WTC11 (cell line): ENCODE measurements at regions of chr17 and their contacts with region 1.

Region 1: GRCh38 chr17:7021993-7022778 is 664 bp upstream of the BCL6B start:
- DNase-seq: peak; percentile 90
- ATAC-seq: peak; percentile 63
- H3K4me3 Mint-ChIP-seq: peak overlapping the region; percentile 91
- H3K27ac Mint-ChIP-seq: peak overlapping the region; percentile 93
- H3K4me1 Mint-ChIP-seq: peaks cover 51% of the 10 kb centered on the region
- H3K27me3 Mint-ChIP-seq: peaks cover 44% of the 10 kb centered on the region
- CTCF ChIP-seq: peak; percentile 88

Region 2: DNA sequence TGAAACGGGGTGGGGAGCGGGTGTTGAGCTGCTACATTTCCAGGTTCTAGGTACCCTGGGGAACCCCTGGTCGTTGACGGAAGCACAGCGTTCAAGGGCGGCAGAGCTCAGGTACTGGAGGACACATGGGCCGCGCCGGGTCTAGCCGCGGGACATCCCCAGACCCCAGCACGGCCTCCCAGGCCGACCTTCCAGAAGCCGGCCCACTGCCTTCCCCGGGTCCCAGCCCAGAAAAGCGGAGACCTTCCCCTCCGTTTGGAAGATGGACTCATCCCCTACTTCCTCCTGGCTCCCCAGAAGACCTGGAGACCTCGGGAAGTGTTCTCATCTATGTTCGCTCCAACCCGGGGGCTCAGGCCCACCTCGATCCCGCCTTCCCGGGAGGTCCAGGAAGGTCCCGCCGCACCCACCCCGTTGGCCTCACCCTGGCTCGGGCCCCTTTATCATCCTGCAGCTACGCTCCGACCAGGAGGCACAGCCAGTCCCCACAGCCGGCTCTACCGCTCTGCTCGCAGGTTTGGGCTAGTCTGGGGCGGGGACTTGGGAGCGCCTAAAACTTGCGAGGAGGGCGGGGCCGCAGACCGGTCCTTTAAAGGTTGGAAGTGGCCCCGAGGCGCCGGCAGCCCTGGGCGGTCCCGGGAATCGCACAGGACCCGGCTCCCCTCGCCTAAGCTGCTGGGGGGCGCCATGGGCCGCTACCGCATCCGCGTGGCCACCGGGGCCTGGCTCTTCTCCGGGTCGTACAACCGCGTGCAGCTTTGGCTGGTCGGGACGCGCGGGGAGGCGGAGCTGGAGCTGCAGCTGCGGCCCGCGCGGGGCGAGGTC is 26.5 kb before region 1 on chr17 and contains the start of gene ALOX12:
- CTCF ChIA-PET with region 1: interaction called, 23 read pairs
- POLR2A ChIA-PET with region 1: no interaction called
- DNase-seq: peak; percentile 77
- ATAC-seq: peak; percentile 78
- H3K4me3 Mint-ChIP-seq: peak within 1 kb of the TSS; percentile 77
- H3K27ac Mint-ChIP-seq: no peak within 1 kb of the TSS
- H3K4me1 Mint-ChIP-seq: peaks cover 8% of the 10 kb centered on the region
- H3K27me3 Mint-ChIP-seq: peaks cover 55% of the 10 kb centered on the region
- CTCF ChIP-seq: no peak
- total RNA-seq, gene ALOX12: 1.6 to 1.9 TPM (median 1.9 TPM) in 3 replicates

Region 3: DNA sequence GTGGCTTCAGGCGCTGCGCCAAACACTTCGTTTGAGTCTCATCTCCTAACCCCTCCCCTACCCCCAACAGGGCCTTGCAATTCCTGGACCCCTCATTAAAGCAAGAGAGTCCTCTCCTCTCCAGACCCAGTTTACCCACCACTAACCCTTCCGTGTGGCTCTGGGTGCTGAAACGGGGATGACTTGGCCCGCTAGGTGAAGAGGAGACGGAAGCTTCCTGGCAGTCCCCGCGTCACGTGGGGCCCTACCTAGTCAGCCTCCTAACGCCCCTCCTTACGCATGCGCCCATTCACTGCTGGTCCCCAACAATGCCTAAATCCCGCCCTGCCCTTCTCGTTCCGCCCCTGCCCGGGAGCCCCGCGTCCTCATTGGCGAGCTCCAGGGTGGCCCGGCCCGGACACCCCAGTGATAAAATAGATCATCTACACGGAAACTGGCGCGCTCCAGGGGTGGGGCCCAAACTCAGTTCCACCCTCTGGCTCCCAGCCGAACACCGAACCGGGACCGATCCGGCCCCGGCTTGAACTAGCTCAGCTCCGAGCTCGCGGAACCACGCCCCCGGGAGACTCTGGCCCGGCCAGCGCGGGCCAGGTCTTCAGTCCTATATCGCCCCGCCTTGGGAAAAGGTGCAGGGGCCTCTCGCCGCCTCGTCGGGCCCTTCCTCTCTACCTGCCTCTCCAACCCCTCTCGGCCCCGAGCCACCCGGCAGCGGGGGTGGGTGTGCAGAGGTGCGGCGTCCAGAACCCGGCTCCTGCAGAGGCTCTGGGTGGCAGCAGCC is 13.6 kb after region 1 on chr17 and contains the start of gene SLC16A13:
- CTCF ChIA-PET with region 1: interaction called, 34 read pairs
- POLR2A ChIA-PET with region 1: interaction called, 10 read pairs
- DNase-seq: peak; percentile 94
- ATAC-seq: peak; percentile 92
- H3K4me3 Mint-ChIP-seq: peak within 1 kb of the TSS; percentile 94
- H3K27ac Mint-ChIP-seq: peak within 1 kb of the TSS; percentile 87; the same call in 1 of the 2 replicates
- H3K4me1 Mint-ChIP-seq: peaks cover 20% of the 10 kb centered on the region
- H3K27me3 Mint-ChIP-seq: peaks cover 20% of the 10 kb centered on the region
- CTCF ChIP-seq: no peak
- total RNA-seq, gene SLC16A13: 5.2 to 7.1 TPM (median 6.9 TPM) in 3 replicates

Region 4: DNA sequence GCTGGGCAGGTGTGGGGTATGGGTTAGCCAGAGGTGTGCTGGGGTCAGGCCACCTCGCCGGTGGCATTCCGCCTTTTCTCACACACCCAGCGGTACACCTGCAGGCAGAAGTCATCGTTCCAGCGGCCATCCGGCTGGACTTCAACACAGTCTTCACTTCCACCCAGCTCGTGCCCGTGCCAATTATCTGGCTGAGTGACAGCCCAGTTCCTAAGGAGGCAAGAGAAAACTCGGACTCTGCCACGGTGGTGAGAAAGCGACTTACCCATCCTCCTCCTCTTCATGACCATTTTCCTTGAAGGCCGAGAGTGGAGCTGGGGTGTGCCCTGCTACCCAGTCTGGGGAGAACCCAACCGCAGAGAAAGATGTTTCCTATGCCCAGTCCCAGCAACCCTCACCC is 79.3 kb after region 1 on chr17:
- CTCF ChIA-PET with region 1: no interaction called
- POLR2A ChIA-PET with region 1: no interaction called
- DNase-seq: no peak
- ATAC-seq: no peak
- H3K4me3 Mint-ChIP-seq: peak overlapping the region; percentile 35; the same call in 1 of the 2 replicates
- H3K27ac Mint-ChIP-seq: no peak overlapping the region
- H3K4me1 Mint-ChIP-seq: no peaks in the 10 kb centered on the region; the same call in 1 of the 2 replicates
- H3K27me3 Mint-ChIP-seq: peaks cover 28% of the 10 kb centered on the region
- CTCF ChIP-seq: no peak